Ovary (tissue), 10 donors: ENCODE measurements at regions of chr13 and their contacts with region 1.

Region 1: DNA sequence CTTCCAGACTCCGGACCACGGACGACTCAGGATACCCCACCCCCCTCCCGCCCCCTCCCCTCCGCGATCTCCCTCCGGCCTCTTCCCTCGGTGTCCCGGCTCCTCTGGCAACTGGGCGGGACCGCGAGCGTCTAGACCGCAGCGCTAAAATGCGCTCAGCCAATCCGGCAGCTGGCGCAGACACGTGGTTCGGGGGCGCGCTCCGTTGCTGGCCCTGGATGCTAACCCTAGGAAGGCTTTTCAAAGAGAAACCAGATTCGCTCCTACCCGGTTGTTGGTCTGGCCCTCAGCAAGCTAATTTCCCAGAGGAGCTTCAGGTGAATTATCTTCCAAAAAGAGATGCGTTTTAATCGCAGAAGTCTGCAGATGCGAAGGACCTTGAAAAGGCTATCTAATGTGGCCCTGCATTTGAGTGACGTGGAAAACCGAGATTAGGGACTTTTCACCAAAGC is at the start of gene DZIP1:
- DNase-seq: peak; percentile 85 to 91 (median 89)
- H3K4me3 ChIP-seq: peak within 1 kb of the TSS; percentile 82
- H3K27ac ChIP-seq: peak within 1 kb of the TSS; percentile 74 to 75
- H3K4me1 ChIP-seq: peaks cover 2% of the 10 kb centered on the region
- H3K27me3 ChIP-seq: no peaks in the 10 kb centered on the region
- CTCF ChIP-seq: no peak
- EP300 ChIP-seq: no peak
- POLR2A ChIP-seq: no peak
- total RNA-seq, gene DZIP1: 22.1 to 55.8 (median 45.2) TPM

Region 2: DNA sequence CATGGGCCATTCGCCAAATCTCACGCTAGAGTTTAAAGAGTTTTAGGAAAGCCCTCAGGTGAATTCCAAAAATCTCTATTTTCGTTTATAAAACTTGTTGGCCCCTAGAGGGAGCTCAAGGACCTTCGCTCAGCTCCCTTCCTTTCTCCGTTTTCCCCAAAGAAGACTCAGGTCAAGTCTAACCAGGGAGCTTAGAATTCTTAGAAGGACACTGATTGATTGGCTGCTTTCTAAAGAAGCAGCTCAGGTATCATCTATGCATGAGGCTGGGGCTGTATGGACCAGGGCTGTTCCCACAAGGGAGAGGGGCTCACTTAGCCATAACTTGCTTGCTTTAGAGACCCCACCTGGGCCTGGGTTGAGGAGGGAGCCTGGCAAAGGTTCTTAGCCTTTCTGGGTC is 20.6 kb before region 1 on chr13:
- intact Hi-C with region 1: loop called in 1 of 4 experiments (anchors 1 kb)
- DNase-seq: peak in 1 of 5 donors; percentile 38
- H3K4me3 ChIP-seq: no peak overlapping the region
- H3K27ac ChIP-seq: no peak overlapping the region
- H3K4me1 ChIP-seq: no peaks in the 10 kb centered on the region
- H3K27me3 ChIP-seq: no peaks in the 10 kb centered on the region
- CTCF ChIP-seq: peak; percentile 29 to 57 (median 54)
- EP300 ChIP-seq: no peak
- POLR2A ChIP-seq: no peak